ENCODE measurements at regions of chr1 and their contacts with region 1.

Region 1: GRCh38 chr1:89804642-89805237 is 16.1 kb upstream of the LRRC8D start:
- DNase-seq: peak; percentile 74
- ATAC-seq: peak; percentile 90
- H3K4me3 ChIP-seq: no peak overlapping the region
- H3K27ac ChIP-seq: no peak overlapping the region
- H3K4me1 ChIP-seq: peaks cover 29% of the 10 kb centered on the region
- H3K27me3 ChIP-seq: peaks cover 0 to 8% of the 10 kb centered on the region in 2 experiments; a peak in 3 of 5 replicates
- CTCF ChIP-seq: peak; percentile 90
- EP300 ChIP-seq: no peak
- POLR2A ChIP-seq: no peak
- RAD21 ChIP-seq: peak; percentile 85

Region 2: GRCh38 chr1:89833183-89834082 is 28.7 kb after region 1 on chr1:
- CTCF ChIA-PET with region 1: no interaction called
- POLR2A ChIA-PET with region 1: no interaction called
- in situ Hi-C with region 1: no loop called
- intact Hi-C with region 1: loop called (anchors 2 kb)
- DNase-seq: peak; percentile 54
- ATAC-seq: no peak
- H3K4me3 ChIP-seq: no peak overlapping the region
- H3K27ac ChIP-seq: peak overlapping the region; percentile 97
- H3K4me1 ChIP-seq: peaks cover 92% of the 10 kb centered on the region
- H3K27me3 ChIP-seq: no peaks in the 10 kb centered on the region
- CTCF ChIP-seq: no peak
- EP300 ChIP-seq: no peak; a peak in 1 of 4 replicates
- POLR2A ChIP-seq: no peak
- RAD21 ChIP-seq: no peak

Region 3: DNA sequence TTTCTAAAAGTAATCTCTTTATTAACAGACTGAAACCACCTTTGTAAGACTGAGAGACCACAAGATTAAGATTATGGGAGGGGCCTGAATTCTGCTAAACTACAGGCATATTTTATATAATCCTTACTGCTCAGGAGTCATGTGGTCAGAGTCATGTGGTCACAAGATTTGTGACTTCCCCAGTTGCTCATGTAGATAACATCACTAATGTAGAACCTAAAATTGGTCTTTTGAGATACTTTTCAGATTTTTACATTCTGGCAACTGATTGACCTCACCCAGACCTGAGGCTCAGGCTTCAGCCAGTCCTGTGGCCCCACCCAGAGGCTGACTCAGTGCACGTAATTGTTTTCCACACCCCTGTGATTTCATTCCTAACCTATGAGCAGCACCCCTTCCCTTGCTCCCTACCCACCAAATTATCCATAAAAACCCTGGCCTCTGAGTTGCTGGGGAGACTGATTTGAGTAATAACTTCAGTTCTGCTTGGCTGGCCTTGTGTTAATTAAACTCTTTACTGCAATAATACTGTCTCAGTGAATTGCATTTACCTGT is 148.4 kb after region 1 on chr1:
- CTCF ChIA-PET with region 1: interaction called, 5 read pairs
- POLR2A ChIA-PET with region 1: no interaction called
- in situ Hi-C with region 1: no loop called
- intact Hi-C with region 1: loop called (anchors 10 kb)
- DNase-seq: peak; percentile 49
- ATAC-seq: peak; percentile 74
- H3K4me3 ChIP-seq: no peak overlapping the region
- H3K27ac ChIP-seq: no peak overlapping the region
- H3K4me1 ChIP-seq: peaks cover 87% of the 10 kb centered on the region
- H3K27me3 ChIP-seq: no peaks in the 10 kb centered on the region
- CTCF ChIP-seq: peak; percentile 76
- EP300 ChIP-seq: no peak
- POLR2A ChIP-seq: no peak
- RAD21 ChIP-seq: peak; percentile 56; the same call in 1 of the 2 replicates

Region 4: GRCh38 chr1:89994805-89995597 is 190.3 kb after region 1 on chr1 and contains the start of gene ZNF326:
- CTCF ChIA-PET with region 1: interaction called, 3 read pairs
- POLR2A ChIA-PET with region 1: no interaction called
- in situ Hi-C with region 1: loop called (anchors 5 kb)
- intact Hi-C with region 1: no loop called
- DNase-seq: peak; percentile 92
- ATAC-seq: peak; percentile 96
- H3K4me3 ChIP-seq: peak within 1 kb of the TSS; percentile 79 to 94 (median 88)
- H3K27ac ChIP-seq: peak within 1 kb of the TSS; percentile 96
- H3K4me1 ChIP-seq: peaks cover 70% of the 10 kb centered on the region
- H3K27me3 ChIP-seq: no peaks in the 10 kb centered on the region; a peak in 1 of 5 replicates
- CTCF ChIP-seq: peak; percentile 44
- EP300 ChIP-seq: no peak; a peak in 1 of 4 replicates
- POLR2A ChIP-seq: peak; percentile 96 to 97
- RAD21 ChIP-seq: peak; percentile 59
- total RNA-seq, gene ZNF326: 16.4 and 20.9 TPM in 2 replicates

Measured in HepG2 (cell line).